ENCODE measurements at regions of chr7 and their contacts with region 1.

Region 1: GRCh38 chr7:156764016-156764669 is 123.6 kb downstream of the RNF32 start:
- DNase-seq: peak; percentile 70
- H3K4me3 Mint-ChIP-seq: no peak overlapping the region
- H3K27ac Mint-ChIP-seq: no peak overlapping the region
- H3K4me1 Mint-ChIP-seq: peaks cover 3% of the 10 kb centered on the region
- H3K27me3 Mint-ChIP-seq: no peaks in the 10 kb centered on the region
- CTCF ChIP-seq: peak; percentile 65

Region 2: DNA sequence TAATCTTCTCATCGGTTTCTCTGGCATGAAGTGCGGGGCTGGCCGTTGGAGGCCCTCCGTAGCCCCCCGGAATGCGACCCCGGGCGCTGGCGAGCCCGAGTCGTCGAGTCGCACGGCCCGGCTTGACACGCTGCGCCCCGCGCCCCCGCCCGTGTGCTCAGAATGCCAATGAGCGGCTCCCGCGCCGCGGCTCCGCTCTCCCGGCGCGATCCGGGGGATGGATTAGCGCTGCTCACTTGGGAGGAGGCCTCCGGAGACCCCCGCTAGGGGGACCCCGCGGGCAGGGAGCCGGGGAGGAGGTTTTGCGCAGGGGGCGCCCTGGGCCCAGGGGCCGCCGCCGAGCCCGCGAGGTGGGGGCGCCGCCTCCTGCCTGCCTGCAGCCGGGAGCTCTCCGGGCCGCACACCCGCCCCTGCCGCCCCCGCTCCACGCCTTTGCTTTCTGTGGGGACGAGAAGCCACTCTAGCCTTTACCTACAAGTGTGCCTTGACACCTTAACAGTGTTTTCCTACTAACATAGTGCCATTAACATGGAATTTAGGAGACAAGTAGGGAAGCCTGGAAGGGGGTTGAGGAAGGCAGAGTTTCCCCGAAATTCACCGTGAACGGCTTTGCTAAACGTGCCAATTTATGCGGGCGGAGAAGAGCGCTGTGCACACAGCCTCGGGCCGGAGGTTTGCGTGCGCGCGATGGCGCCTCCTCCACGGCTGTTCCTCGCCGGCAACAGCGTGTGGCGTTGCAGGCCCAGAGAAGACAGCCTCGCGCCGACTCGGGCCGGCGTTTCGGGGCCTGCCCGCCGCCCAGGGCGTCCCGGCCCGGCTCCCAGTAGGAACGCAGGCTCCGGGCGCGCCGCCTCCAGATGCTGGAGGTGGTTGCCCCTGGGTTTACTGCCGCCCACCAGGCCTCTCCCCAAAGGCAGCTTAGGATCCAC is 959.0 kb before region 1 on chr7:
- CTCF ChIA-PET with region 1: no interaction called
- POLR2A ChIA-PET with region 1: no interaction called
- intact Hi-C with region 1: loop called (anchors 1 kb)
- DNase-seq: peak; percentile 55
- H3K4me3 Mint-ChIP-seq: peak overlapping the region; percentile 60
- H3K27ac Mint-ChIP-seq: no peak overlapping the region
- H3K4me1 Mint-ChIP-seq: peaks cover 5% of the 10 kb centered on the region
- H3K27me3 Mint-ChIP-seq: peaks cover 16% of the 10 kb centered on the region
- CTCF ChIP-seq: peak; percentile 57

Region 3: GRCh38 chr7:156811706-156812105 is 47.6 kb after region 1 on chr7:
- CTCF ChIA-PET with region 1: no interaction called
- POLR2A ChIA-PET with region 1: no interaction called
- intact Hi-C with region 1: no loop called
- DNase-seq: no peak
- H3K4me3 Mint-ChIP-seq: no peak overlapping the region
- H3K27ac Mint-ChIP-seq: no peak overlapping the region
- H3K4me1 Mint-ChIP-seq: peaks cover 4% of the 10 kb centered on the region
- H3K27me3 Mint-ChIP-seq: no peaks in the 10 kb centered on the region
- CTCF ChIP-seq: no peak

Region 4: GRCh38 chr7:156854654-156855053 is 90.5 kb after region 1 on chr7:
- CTCF ChIA-PET with region 1: no interaction called
- POLR2A ChIA-PET with region 1: no interaction called
- intact Hi-C with region 1: no loop called
- DNase-seq: no peak
- H3K4me3 Mint-ChIP-seq: no peak overlapping the region
- H3K27ac Mint-ChIP-seq: no peak overlapping the region
- H3K4me1 Mint-ChIP-seq: peaks cover 14% of the 10 kb centered on the region
- H3K27me3 Mint-ChIP-seq: no peaks in the 10 kb centered on the region
- CTCF ChIP-seq: no peak

Region 5: GRCh38 chr7:157335991-157336382 is 571.8 kb after region 1 on chr7:
- CTCF ChIA-PET with region 1: no interaction called
- POLR2A ChIA-PET with region 1: no interaction called
- intact Hi-C with region 1: no loop called
- DNase-seq: no peak
- H3K4me3 Mint-ChIP-seq: peak overlapping the region; percentile 79
- H3K27ac Mint-ChIP-seq: no peak overlapping the region
- H3K4me1 Mint-ChIP-seq: peaks cover 13% of the 10 kb centered on the region
- H3K27me3 Mint-ChIP-seq: no peaks in the 10 kb centered on the region
- CTCF ChIP-seq: no peak

Measured in MCF 10A (cell line).